Activated CD4-positive, alpha-beta memory T cell treated with anti-CD3 and anti-CD28 coated beads for 36 hours (primary cell): ENCODE measurements at regions of chr12 and their contacts with region 1.

Region 1: DNA sequence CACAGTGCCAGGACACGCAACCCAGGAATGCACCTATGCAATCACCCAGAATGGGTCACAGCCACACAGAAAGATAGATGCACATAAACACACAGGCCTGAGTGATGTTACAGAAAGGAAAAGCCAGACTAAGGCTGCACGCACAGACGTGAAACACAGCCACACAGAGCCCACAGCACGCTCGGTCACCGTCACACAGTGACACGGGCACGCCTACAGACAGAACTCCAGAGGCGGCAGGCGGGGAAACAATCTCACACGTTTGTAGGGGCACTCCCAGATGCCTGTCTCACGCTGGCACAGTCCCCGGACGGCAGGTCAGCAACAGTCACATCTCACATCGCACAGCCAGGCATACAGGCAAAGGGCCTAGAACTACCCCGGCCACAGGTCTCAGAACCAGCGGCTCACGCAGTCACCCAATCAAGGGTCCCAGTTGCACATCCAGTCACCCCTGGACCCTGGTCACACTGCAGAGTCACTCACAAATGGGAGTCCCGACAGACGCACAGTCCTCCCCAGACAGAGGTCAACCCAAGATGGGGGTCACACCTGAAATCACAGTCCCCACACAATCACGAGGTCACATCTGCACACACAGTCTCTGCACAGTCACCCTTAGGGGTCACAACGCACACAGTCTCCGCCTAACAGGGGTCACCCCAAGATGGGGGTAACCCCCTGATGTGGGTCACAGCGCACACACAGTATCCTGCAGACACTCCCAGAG is 790 bp downstream of the SSH1 start:
- DNase-seq: peak; percentile 82
- H3K4me3 Mint-ChIP-seq: peak overlapping the region; percentile 97
- H3K27ac Mint-ChIP-seq: peak overlapping the region; percentile 92
- H3K4me1 Mint-ChIP-seq: peaks cover 53% of the 10 kb centered on the region
- H3K27me3 Mint-ChIP-seq: peaks cover 2% of the 10 kb centered on the region

Region 2: GRCh38 chr12:108562348-108563135 is 294.1 kb before region 1 on chr12 and contains the start of gene ISCU:
- CTCF ChIA-PET with region 1: no interaction called
- POLR2A ChIA-PET with region 1: interaction called, 4 read pairs
- intact Hi-C with region 1: loop called (anchors 2 kb)
- DNase-seq: peak; percentile 99
- H3K4me3 Mint-ChIP-seq: peak within 1 kb of the TSS; percentile 100
- H3K27ac Mint-ChIP-seq: peak within 1 kb of the TSS; percentile 99
- H3K4me1 Mint-ChIP-seq: peaks cover 57% of the 10 kb centered on the region
- H3K27me3 Mint-ChIP-seq: no peaks in the 10 kb centered on the region
- total RNA-seq, gene ISCU: 88.6 to 94.3 TPM

Region 3: GRCh38 chr12:108731105-108731865 is 125.3 kb before region 1 on chr12 and contains the start of gene CORO1C:
- CTCF ChIA-PET with region 1: no interaction called
- POLR2A ChIA-PET with region 1: interaction called, 3 read pairs
- intact Hi-C with region 1: loop called (anchors 5 kb)
- DNase-seq: peak; percentile 97
- H3K4me3 Mint-ChIP-seq: peak within 1 kb of the TSS; percentile 91
- H3K27ac Mint-ChIP-seq: peak within 1 kb of the TSS; percentile 91
- H3K4me1 Mint-ChIP-seq: peaks cover 34% of the 10 kb centered on the region
- H3K27me3 Mint-ChIP-seq: no peaks in the 10 kb centered on the region
- total RNA-seq, gene CORO1C: 62.1 to 70.9 TPM

Region 4: DNA sequence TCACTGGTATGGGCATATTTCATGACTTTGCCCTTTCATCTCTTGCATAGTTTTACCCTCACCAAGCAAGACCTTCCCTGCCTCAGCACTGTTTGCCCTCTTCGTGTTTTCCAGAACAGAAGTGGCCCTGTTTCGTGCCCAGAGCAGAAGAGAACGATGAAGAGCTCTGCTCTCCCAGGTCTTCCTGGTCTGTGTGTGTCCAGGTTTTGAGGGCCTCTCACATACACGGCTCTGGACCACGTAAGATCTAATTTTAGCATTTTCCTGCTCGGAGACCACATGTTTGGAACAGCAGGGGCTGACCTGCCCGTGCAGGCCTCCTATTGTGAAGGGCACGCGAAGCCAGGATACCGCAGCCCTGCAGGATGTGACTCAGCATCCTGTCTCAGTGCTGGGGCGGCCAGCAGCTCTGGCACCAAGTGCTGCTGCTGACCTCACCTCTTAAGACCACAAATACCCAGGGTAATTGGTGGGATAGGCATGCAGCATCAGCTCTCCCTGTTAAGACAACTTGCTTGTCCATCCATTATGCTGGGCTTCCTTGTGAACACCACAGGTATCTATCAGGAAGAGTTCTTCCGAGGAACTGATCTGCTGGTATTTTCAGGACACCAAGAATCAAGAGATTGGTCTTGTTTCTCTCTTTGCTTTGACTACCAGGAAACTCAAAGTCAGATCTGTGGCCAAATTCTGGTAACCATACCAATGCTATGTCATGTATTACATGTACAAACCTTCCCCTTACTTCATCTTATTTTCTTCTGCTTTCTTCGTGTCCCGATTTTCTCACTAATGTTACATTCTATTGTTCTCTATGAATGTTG is 18.2 kb before region 1 on chr12:
- CTCF ChIA-PET with region 1: no interaction called
- POLR2A ChIA-PET with region 1: interaction called, 25 read pairs
- intact Hi-C with region 1: loop called (anchors 1 kb)
- DNase-seq: peak; percentile 90
- H3K4me3 Mint-ChIP-seq: peak overlapping the region; percentile 63
- H3K27ac Mint-ChIP-seq: peak overlapping the region; percentile 92
- H3K4me1 Mint-ChIP-seq: peaks cover 38% of the 10 kb centered on the region
- H3K27me3 Mint-ChIP-seq: no peaks in the 10 kb centered on the region

Region 5: DNA sequence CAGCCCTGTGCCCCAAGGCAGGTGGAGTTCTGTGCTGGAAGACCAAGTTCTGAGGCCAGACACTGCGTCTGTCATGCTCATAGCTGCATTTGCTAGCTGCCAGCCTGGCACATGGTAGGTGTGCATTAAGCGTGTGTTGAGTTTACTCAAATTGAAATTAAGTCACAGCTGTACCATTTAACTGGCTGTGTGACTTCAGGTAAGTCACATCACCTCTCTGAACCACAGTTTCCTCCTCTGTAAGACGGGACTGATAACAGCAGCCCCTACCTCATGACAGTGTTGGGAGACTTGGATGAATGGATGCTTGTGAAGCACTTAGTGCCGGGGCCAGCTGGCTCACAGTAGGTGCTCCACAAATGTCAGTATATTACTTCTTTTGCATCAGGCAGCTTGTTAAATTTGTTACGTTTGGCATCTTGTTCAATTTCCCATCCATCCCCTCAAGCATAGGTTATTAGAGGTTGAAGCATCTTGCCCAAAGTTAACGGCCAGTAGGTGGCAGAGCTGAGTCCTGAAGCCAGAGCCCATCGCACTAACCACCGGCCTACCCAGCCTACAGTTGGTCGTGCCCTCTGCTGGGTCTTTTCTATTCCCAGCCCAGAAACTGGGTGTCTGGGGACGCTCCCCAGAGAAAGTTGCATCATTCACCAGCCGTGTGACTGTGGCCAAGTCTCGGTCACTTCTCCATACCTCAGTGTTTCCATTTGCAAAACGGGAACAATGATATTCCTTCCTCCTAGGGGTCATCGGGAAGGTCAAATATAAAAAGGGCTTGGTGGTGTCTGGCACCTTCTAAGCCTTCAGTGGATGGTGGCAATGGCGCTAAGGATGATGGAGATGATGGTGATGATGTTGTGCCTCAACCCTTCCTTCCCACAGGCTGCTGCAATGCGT is 27.8 kb after region 1 on chr12:
- CTCF ChIA-PET with region 1: interaction called, 12 read pairs
- POLR2A ChIA-PET with region 1: no interaction called
- intact Hi-C with region 1: no loop called
- DNase-seq: peak; percentile 80
- H3K4me3 Mint-ChIP-seq: no peak overlapping the region
- H3K27ac Mint-ChIP-seq: no peak overlapping the region
- H3K4me1 Mint-ChIP-seq: peaks cover 2% of the 10 kb centered on the region
- H3K27me3 Mint-ChIP-seq: no peaks in the 10 kb centered on the region

Region 6: DNA sequence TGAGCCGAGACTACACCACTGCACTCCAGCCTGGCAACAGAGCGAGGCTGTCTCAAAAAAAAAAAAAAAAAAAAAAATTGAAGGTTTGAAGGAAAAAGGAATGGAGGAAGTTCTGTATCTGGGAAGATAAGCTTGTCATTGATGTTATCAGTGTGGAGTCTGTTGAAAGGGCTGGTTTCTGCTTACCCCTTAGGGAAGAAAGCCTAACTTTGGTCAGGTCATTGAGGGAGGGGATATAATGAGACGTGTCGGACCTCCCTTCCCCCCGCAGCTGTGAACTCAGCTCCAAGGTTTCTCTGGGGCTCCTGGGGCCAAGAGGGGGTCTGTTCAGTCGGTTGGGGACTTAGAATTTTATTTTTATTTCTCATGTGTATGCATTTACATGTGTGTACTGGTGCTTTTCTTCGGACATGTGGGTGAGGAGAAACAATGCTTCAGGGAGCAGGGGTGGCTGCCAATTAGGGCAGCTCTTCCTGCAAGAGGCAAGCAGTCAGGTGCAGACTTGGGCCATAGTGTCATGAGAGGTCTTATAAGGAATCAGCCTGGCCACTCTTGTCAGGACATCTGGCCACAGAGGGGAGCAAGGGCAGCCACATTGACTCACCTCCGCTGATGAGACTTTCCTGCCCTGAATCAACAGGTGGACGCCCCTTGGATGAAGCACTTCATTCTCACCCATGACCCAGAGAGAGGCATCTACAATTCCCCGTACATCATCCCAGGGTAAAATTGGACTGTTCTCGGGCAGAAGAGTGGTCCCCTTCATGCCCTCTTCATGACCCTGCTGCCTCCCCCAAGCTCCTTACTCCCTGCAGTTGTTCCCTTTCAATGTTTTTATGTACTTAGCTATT is 40.0 kb after region 1 on chr12:
- CTCF ChIA-PET with region 1: no interaction called
- POLR2A ChIA-PET with region 1: no interaction called
- intact Hi-C with region 1: no loop called
- DNase-seq: no peak
- H3K4me3 Mint-ChIP-seq: no peak overlapping the region
- H3K27ac Mint-ChIP-seq: no peak overlapping the region
- H3K4me1 Mint-ChIP-seq: no peaks in the 10 kb centered on the region
- H3K27me3 Mint-ChIP-seq: peaks cover 12% of the 10 kb centered on the region

Region 7: DNA sequence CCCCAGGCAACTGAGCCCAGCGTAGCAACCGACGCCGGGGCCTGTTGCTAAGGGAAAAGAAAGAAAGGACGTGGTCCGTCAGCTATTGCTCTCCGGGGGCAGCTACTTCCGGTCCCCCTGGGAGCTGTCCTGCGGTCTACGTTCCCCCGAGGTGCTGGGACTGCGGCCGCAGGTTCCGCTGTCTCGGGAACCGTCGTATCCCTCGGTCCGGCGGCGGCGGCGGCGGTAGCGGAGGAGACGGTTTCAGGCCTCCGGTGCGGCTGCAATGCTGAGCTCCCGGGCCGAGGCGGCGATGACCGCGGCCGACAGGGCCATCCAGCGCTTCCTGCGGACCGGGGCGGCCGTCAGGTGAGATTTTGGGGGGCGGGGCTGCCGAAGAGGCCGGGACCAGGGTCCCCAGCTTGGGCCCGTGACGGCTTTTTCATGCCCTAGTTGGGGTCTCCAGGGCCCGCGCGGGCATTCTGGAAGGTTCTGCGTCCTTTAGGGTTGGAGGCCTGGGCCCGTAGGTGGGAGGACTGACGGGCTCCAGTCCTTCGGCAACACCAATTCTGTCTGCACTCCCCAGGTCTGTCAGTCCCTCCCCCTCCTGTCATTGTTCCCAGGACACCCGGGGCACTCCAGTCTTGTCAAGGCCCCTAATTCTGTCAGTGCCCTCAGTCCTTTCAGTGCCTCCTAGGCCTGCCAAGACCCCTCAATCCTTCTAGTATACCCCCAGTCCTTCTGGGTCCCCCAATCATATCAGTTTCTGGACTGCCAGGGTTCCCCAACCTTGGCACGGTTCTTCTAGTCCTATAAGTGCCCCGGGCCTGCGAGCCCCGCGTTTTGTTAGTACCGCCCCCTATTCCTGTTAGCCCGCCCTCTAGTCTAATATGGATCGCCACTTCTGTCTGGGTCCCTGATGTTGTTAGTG is 196.1 kb after region 1 on chr12 and contains the start of gene USP30:
- CTCF ChIA-PET with region 1: no interaction called
- POLR2A ChIA-PET with region 1: interaction called, 3 read pairs
- intact Hi-C with region 1: loop called (anchors 2 kb)
- DNase-seq: peak; percentile 89
- H3K4me3 Mint-ChIP-seq: peak within 1 kb of the TSS; percentile 89
- H3K27ac Mint-ChIP-seq: peak within 1 kb of the TSS; percentile 97
- H3K4me1 Mint-ChIP-seq: peaks cover 15% of the 10 kb centered on the region
- H3K27me3 Mint-ChIP-seq: no peaks in the 10 kb centered on the region
- total RNA-seq, gene USP30: 11.4 to 11.8 TPM

Region 8: DNA sequence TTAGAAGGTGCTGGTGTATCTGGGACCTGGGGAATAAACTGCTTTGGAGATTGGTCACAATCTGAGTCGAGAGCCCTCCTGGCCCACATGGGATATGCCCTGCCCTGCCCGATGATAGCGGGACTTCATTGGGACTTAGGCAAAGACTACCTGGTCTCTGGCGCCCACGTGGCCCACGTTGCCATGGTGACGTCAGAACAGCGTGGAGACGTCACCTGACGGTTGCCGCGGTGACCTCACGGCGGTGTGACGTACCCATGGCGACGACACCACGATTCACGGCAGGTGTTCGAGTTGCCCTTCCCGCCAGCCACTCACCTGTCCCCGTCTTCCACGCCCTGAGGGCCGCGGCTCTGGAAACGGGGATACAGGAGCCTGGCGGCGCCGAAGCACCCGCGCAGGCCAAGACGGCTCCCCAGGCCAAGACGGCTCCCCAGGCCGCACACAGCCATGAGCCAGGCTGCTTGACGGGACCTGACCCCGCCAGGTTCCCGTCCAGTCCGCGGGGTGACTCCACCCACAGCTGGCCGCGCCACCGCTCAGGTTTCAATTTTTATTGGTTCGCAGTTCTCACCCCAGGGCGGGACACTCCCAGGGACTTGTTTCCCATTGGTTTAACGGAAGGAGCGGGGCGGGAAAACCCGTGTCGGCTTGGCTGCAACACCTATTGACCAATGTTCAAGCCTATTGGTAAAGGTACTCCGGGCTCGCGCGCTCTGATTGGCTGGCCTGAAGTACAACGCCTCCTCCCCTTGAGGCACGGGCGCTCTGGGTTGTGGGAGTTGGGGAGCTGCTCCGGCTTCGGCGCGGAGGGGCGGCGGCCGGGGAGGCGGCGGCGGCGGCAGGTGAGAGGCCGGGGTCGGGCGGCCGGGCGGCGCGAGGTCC is 716.7 kb after region 1 on chr12 and contains the starts of genes MMAB and MVK:
- CTCF ChIA-PET with region 1: no interaction called
- POLR2A ChIA-PET with region 1: no interaction called
- intact Hi-C with region 1: loop called (anchors 10 kb)
- DNase-seq: peak; percentile 100
- H3K4me3 Mint-ChIP-seq: peak within 1 kb of the TSS; percentile 86
- H3K27ac Mint-ChIP-seq: peak within 1 kb of the TSS; percentile 85
- H3K4me1 Mint-ChIP-seq: peaks cover 27% of the 10 kb centered on the region
- H3K27me3 Mint-ChIP-seq: no peaks in the 10 kb centered on the region
- total RNA-seq, gene MMAB: 42.4 to 48.3 TPM
- total RNA-seq, gene MVK: 21.2 TPM